ENCODE measurements at regions of chr19 and their contacts with region 1.

Region 1: GRCh38 chr19:43901395-43902390 is 33.4 kb downstream of the ZNF45 start:
- DNase-seq: peak; percentile 54
- H3K4me3 Mint-ChIP-seq: peak overlapping the region; percentile 81
- H3K27ac Mint-ChIP-seq: peak overlapping the region; percentile 20
- H3K4me1 Mint-ChIP-seq: peaks cover 15% of the 10 kb centered on the region
- H3K27me3 Mint-ChIP-seq: no peaks in the 10 kb centered on the region

Region 2: GRCh38 chr19:43754503-43755255 is 147.0 kb before region 1 on chr19 and contains the start of gene SMG9:
- intact Hi-C with region 1: no loop called
- DNase-seq: peak; percentile 99
- H3K4me3 Mint-ChIP-seq: peak within 1 kb of the TSS; percentile 98
- H3K27ac Mint-ChIP-seq: peak within 1 kb of the TSS; percentile 100
- H3K4me1 Mint-ChIP-seq: peaks cover 57% of the 10 kb centered on the region
- H3K27me3 Mint-ChIP-seq: peaks cover 2% of the 10 kb centered on the region
- total RNA-seq, gene SMG9: 86.6 and 89.2 TPM in 2 replicates

Region 3: GRCh38 chr19:43820884-43821215 is 80.8 kb before region 1 on chr19:
- intact Hi-C with region 1: no loop called
- DNase-seq: no peak
- H3K4me3 Mint-ChIP-seq: peak overlapping the region; percentile 82
- H3K27ac Mint-ChIP-seq: no peak overlapping the region
- H3K4me1 Mint-ChIP-seq: peaks cover 10% of the 10 kb centered on the region
- H3K27me3 Mint-ChIP-seq: peaks cover 26% of the 10 kb centered on the region

Region 4: DNA sequence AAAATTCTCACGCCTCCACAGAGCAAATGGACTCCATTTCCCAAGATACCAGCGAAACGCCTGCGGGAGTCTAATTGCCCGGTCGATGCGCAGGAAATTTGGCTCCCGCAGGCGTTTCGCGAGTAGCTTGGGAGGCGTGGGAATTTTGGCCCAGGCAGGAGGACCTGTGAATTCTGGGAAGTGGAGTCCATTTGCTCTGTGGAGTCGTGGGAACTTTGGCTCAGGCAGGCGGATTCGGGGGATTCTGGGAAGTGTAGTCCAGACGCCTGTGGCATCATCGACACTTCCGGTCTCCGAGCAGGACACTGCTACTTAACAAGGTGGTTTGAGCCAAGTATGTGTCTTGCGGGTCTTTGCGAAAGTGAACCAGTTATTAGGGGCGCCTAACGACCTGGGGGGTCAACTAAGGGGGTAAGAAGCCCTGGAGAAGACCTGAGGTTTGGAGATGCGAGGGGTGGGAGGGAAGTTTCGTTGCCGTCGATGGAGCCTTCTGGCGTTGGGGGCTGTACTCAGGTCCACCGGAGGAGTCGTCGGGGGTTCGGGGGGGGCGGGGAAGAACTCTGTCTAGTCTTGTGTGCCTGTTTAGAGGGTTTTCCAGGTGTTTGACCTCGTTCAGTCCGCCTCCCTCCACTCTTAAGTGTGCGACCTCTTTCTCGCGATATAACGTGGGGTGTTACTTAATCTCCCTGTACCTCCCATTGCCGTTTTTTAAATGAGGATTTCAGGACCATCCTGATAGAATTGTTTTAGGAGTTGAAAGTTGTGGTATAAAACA is 82.4 kb after region 1 on chr19 and contains the start of gene ZNF155:
- intact Hi-C with region 1: loop called (anchors 5 kb)
- DNase-seq: peak; percentile 56
- H3K4me3 Mint-ChIP-seq: peak within 1 kb of the TSS; percentile 94
- H3K27ac Mint-ChIP-seq: peak within 1 kb of the TSS; percentile 88
- H3K4me1 Mint-ChIP-seq: peaks cover 8% of the 10 kb centered on the region
- H3K27me3 Mint-ChIP-seq: no peaks in the 10 kb centered on the region
- total RNA-seq, gene ZNF155: 5.2 and 6.5 TPM in 2 replicates

Measured in activated T-helper 1 cell treated with anti-CD3 and anti-CD28 coated beads, Interleukin-12 subunit alpha, Interleukin-12 subunit beta, Interleukin-2, Interleukin-4 antibody, amounts not matched to agents 30 ng/mL and 10 ng/mL and 1 ng/mL, durations not matched to agents 14 hours and 24 hours and 36 hours (primary cell).